Mucosa of descending colon (tissue), 3 donors: ENCODE measurements at regions of chr2 and their contacts with region 1.

Region 1: DNA sequence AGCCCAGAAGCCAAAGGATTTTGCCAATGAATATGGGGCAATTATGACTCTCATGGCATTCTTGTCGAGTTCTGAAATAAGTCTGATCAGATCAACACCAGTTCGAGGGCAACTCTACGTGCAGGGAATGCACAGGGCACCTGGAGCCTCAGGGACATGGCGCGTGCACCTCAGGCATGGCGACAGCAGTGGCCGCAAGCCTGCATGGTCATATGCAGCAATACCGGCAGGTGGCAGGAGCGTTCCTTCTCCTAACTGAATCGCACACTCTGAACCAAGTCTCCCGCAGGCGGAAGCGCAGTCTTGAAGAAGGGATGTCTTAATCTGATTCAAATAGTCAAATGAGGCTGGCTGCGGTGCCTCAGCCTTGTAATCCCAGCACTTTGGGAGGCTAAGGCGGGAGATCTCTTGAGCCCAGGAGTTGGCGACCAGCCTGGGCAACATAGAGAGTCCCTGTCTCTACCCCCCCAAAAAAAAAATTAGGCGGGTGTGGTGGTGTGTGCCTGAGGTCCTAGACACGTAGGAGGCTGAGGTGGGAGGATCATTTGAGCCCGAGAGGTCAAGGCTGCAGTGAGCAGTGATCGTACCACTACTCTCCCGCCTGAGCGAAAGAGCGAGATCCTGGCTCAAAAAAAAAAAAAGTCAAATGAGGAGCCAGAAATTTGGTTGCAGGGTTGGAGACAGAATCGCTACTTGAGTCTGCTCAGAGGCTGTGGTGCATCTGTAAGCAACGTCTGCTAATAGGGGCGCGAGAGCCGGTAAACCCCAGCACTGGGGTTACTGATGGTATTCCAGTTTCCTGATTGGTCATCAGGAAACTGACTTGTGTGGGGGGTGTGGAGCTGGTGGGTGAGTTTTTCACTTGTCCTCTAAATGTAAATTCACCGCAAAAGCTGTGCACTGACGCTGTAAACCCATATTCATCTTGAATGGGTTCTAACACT is 28.8 kb downstream of the FHL2 start:
- DNase-seq: peak; percentile 89 to 94 (median 93)
- ATAC-seq: peak; percentile 94
- H3K4me3 ChIP-seq: no peak overlapping the region
- H3K4me1 ChIP-seq: peaks cover 6% of the 10 kb centered on the region
- CTCF ChIP-seq: peak; percentile 83

Region 2: DNA sequence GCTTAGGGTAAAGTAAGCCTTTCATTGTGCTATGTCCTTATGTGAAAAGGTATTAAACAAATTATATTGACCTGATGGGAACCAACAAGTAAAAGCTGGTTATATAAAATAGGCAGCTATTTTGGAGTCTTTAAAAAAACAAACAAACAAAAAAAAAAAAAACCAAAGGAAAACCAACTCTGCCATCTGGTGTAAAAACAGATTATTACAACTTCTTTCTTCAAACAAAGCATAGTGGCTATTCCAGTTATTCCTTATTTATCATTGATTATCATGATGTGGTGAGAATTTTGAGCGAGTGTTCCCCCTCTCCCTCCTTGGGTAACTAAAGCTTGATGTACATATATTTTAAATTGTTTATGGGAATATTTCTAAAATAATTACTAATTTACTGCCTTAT is 151.2 kb after region 1 on chr2:
- intact Hi-C with region 1: loop called (anchors 5 kb)
- DNase-seq: no peak
- ATAC-seq: no peak
- H3K4me3 ChIP-seq: no peak overlapping the region
- H3K4me1 ChIP-seq: peaks cover 10% of the 10 kb centered on the region
- CTCF ChIP-seq: no peak